ENCODE measurements at regions of chr16 and their contacts with region 1.

Region 1: DNA sequence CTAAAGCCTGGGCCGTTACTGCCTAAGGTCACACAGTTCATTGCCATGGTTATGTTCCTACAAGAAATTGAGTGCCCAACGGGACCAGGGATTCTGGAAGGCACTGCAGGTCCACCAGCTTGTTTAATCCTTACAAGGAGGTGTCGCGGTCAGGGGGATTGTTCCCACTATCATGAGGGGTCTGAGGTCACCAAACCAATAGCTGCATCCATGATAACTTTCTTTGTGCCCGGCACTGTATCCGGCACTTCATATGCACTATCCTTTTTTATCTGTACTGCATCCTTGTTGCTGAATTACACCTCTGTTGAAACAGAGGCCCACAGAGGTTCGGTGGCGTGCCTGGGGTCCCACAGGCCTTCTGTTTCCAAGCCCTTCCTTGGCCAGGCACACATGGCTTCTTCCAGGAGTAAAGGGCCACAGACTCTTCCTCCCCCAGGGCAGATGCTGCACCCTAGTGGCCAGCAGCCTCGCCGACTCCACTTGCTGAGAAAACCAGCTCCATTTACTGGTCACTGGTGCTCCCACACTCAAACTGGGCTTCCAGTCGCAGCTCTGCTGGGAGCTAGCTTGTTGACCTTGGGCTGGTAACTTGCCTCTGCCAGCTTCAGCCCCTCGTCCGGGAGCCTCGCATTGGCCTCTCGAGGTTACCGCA is 82.0 kb upstream of the PLCG2 start:
- DNase-seq: peak; percentile 54
- H3K4me3 Mint-ChIP-seq: no peak overlapping the region
- H3K27ac Mint-ChIP-seq: no peak overlapping the region
- H3K4me1 Mint-ChIP-seq: no peaks in the 10 kb centered on the region
- H3K27me3 Mint-ChIP-seq: no peaks in the 10 kb centered on the region

Region 2: DNA sequence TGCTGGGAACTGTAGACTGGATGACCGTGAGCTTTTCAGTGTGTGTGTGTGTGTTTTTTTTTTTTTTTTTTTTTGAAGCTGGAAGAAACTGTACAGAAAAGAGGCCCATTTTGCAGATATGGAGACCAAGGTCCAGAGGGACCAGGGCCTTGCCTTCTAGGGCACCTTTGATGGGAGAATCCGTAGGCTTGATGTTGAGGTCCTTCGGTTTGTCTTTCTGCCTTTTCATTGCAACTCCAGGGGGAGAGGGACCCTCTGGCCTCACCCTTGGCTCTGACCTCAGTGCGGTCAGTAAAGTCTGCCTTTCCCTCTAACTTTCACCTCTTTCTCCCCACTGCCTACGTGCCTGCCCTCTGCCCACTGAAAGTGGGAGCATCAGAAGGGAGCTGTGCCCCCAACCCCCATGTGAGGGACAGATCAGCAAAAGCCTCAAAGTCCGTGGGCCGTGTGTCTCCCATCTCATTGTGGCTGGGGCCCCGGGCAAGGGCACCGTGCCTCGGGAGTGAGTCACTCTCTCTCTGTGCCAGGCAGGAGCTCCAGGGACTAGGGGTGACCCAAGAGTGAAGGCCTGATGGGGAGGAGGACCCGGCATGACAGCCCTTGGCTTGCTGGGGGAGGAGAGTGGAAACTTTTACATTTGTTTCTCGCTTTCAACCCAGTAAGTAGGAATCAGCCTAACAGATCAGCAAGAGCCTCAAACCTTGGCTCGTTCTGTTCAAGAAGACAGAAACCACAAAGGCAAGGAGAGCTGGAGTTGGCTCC is 128.9 kb before region 1 on chr16:
- CTCF ChIA-PET with region 1: no interaction called
- POLR2A ChIA-PET with region 1: no interaction called
- DNase-seq: no peak
- H3K4me3 Mint-ChIP-seq: no peak overlapping the region
- H3K27ac Mint-ChIP-seq: peak overlapping the region; percentile 57
- H3K4me1 Mint-ChIP-seq: peaks cover 3% of the 10 kb centered on the region
- H3K27me3 Mint-ChIP-seq: no peaks in the 10 kb centered on the region

Region 3: GRCh38 chr16:81623363-81624102 is 73.6 kb before region 1 on chr16:
- CTCF ChIA-PET with region 1: interaction called, 11 read pairs
- POLR2A ChIA-PET with region 1: no interaction called
- DNase-seq: peak; percentile 65
- H3K4me3 Mint-ChIP-seq: no peak overlapping the region
- H3K27ac Mint-ChIP-seq: no peak overlapping the region
- H3K4me1 Mint-ChIP-seq: peaks cover 14% of the 10 kb centered on the region
- H3K27me3 Mint-ChIP-seq: no peaks in the 10 kb centered on the region

Region 4: GRCh38 chr16:81730090-81731051 is 33.3 kb after region 1 on chr16:
- CTCF ChIA-PET with region 1: no interaction called
- POLR2A ChIA-PET with region 1: no interaction called
- DNase-seq: peak; percentile 52
- H3K4me3 Mint-ChIP-seq: peak overlapping the region; percentile 72
- H3K27ac Mint-ChIP-seq: peak overlapping the region; percentile 91
- H3K4me1 Mint-ChIP-seq: peaks cover 23% of the 10 kb centered on the region
- H3K27me3 Mint-ChIP-seq: peaks cover 2% of the 10 kb centered on the region